B cell (primary cell): ENCODE measurements at regions of chr6 and their contacts with region 1.

Region 1: GRCh38 chr6:110147870-110148269 is 31.6 kb downstream of the WASF1 start:
- DNase-seq: peak; percentile 8
- ATAC-seq: no peak
- H3K4me3 ChIP-seq: peak overlapping the region in 1 of 5 experiments; percentile 30
- H3K4me3 Mint-ChIP-seq: peak overlapping the region; percentile 5
- H3K27ac ChIP-seq: peak overlapping the region; percentile 30 to 61
- H3K27ac Mint-ChIP-seq: peak overlapping the region; percentile 23
- H3K4me1 ChIP-seq: peaks cover 17 to 35% of the 10 kb centered on the region in 2 donors
- H3K4me1 Mint-ChIP-seq: peaks cover 29% of the 10 kb centered on the region
- H3K27me3 ChIP-seq: no peaks in the 10 kb centered on the region
- H3K27me3 Mint-ChIP-seq: no peaks in the 10 kb centered on the region
- CTCF ChIP-seq: no peak

Region 2: GRCh38 chr6:109890031-109890430 is 257.8 kb before region 1 on chr6:
- CTCF ChIA-PET with region 1: no interaction called
- POLR2A ChIA-PET with region 1: no interaction called
- intact Hi-C with region 1: no loop called
- DNase-seq: no peak
- ATAC-seq: no peak
- H3K4me3 ChIP-seq: no peak overlapping the region
- H3K4me3 Mint-ChIP-seq: no peak overlapping the region
- H3K27ac ChIP-seq: no peak overlapping the region
- H3K27ac Mint-ChIP-seq: no peak overlapping the region
- H3K4me1 ChIP-seq: peaks cover 36 to 38% of the 10 kb centered on the region in 2 donors
- H3K4me1 Mint-ChIP-seq: peaks cover 33% of the 10 kb centered on the region
- H3K27me3 ChIP-seq: no peaks in the 10 kb centered on the region
- H3K27me3 Mint-ChIP-seq: no peaks in the 10 kb centered on the region
- CTCF ChIP-seq: no peak

Region 3: DNA sequence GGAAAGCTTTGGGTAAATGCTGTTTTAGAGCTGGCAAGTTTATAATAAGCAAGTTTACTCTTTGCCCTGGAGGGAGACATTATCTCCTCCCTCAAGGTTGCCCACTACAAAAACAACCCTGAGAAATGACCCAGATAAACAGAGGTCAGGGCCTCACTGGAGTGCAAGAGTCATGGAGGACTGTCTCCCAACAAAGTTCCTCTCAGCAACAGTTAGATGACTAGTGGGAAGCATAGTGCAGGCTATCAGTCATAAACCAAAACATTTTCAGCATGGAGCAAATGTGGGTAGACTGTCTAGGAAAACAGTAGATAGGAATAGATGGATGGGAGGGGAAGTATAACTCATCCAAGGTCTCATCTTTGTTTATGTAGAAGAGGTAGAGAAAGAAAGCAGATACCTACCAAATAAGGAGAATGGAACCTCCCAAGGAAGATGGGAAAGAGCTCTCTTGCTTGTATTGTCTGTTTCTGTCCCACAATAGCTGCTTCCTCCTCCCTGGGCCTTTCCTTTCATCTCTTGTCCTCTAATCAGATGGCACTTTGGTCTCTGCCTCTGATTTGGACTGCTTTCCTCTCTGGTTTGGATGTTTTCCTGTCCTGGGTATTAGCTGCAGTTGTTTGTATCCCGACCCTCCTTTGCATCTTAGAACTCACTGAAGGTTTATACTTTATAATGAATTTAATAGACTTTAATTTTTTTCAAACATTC is 63.8 kb before region 1 on chr6:
- CTCF ChIA-PET with region 1: no interaction called
- POLR2A ChIA-PET with region 1: no interaction called
- intact Hi-C with region 1: no loop called
- DNase-seq: no peak
- ATAC-seq: no peak
- H3K4me3 ChIP-seq: no peak overlapping the region
- H3K4me3 Mint-ChIP-seq: no peak overlapping the region
- H3K27ac ChIP-seq: no peak overlapping the region
- H3K27ac Mint-ChIP-seq: no peak overlapping the region
- H3K4me1 ChIP-seq: peaks cover 2 to 3% of the 10 kb centered on the region in 2 donors
- H3K4me1 Mint-ChIP-seq: peaks cover 12% of the 10 kb centered on the region
- H3K27me3 ChIP-seq: no peaks in the 10 kb centered on the region
- H3K27me3 Mint-ChIP-seq: no peaks in the 10 kb centered on the region
- CTCF ChIP-seq: no peak

Region 4: DNA sequence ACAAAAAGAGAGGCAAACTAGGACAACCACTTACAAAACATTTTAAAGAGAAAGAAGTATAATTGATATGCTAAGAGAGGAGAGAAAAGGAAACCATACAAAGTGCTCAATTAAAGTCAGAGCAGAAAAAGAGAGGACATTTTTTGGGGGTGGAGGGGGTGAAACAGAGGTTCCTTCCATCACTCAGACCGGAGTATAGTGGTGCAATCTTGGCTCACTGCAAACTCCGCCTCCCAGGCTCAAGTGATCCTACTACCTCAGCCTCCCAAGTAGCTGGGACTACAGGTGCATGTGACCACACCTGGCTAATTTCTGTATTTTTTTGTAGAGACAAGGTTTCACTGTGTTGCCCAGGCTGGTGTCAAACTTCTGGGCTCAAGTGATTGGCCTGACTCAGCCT is 22.2 kb after region 1 on chr6:
- CTCF ChIA-PET with region 1: no interaction called
- POLR2A ChIA-PET with region 1: no interaction called
- intact Hi-C with region 1: no loop called
- DNase-seq: no peak
- ATAC-seq: no peak
- H3K4me3 ChIP-seq: no peak overlapping the region
- H3K4me3 Mint-ChIP-seq: no peak overlapping the region
- H3K27ac ChIP-seq: no peak overlapping the region
- H3K27ac Mint-ChIP-seq: no peak overlapping the region
- H3K4me1 ChIP-seq: no peaks in the 10 kb centered on the region
- H3K4me1 Mint-ChIP-seq: no peaks in the 10 kb centered on the region
- H3K27me3 ChIP-seq: no peaks in the 10 kb centered on the region
- H3K27me3 Mint-ChIP-seq: no peaks in the 10 kb centered on the region
- CTCF ChIP-seq: no peak

Region 5: GRCh38 chr6:110720066-110720465 is 572.2 kb after region 1 on chr6:
- CTCF ChIA-PET with region 1: no interaction called
- POLR2A ChIA-PET with region 1: interaction called, 10 read pairs
- intact Hi-C with region 1: no loop called
- DNase-seq: no peak
- ATAC-seq: no peak
- H3K4me3 ChIP-seq: no peak overlapping the region
- H3K4me3 Mint-ChIP-seq: no peak overlapping the region
- H3K27ac ChIP-seq: no peak overlapping the region
- H3K27ac Mint-ChIP-seq: no peak overlapping the region
- H3K4me1 ChIP-seq: no peaks in the 10 kb centered on the region
- H3K4me1 Mint-ChIP-seq: peaks cover 1% of the 10 kb centered on the region
- H3K27me3 ChIP-seq: no peaks in the 10 kb centered on the region
- H3K27me3 Mint-ChIP-seq: no peaks in the 10 kb centered on the region
- CTCF ChIP-seq: no peak